Gastrocnemius medialis (tissue), 4 donors: ENCODE measurements at regions of chr18 and their contacts with region 1.

Region 1: GRCh38 chr18:10851824-10852319 is 297.5 kb downstream of the PIEZO2 start:
- DNase-seq: no peak
- ATAC-seq: no peak
- H3K4me3 ChIP-seq: no peak overlapping the region
- H3K27ac ChIP-seq: no peak overlapping the region
- H3K4me1 ChIP-seq: no peaks in the 10 kb centered on the region
- H3K27me3 ChIP-seq: no peaks in the 10 kb centered on the region
- CTCF ChIP-seq: peak; percentile 55 to 75 (median 69)
- POLR2A ChIP-seq: no peak

Region 2: GRCh38 chr18:11040823-11041656 is 189.2 kb after region 1 on chr18:
- in situ Hi-C with region 1: loop called (anchors 5 to 25 kb)
- intact Hi-C with region 1: no loop called
- DNase-seq: peak in 1 of 2 donors; percentile 4
- ATAC-seq: peak; percentile 44 to 69
- H3K4me3 ChIP-seq: no peak overlapping the region
- H3K27ac ChIP-seq: no peak overlapping the region
- H3K4me1 ChIP-seq: peaks cover 0 to 3% of the 10 kb centered on the region in 2 donors
- H3K27me3 ChIP-seq: no peaks in the 10 kb centered on the region
- CTCF ChIP-seq: peak in 4 of 5 experiments; percentile 42 to 64 (median 56)
- POLR2A ChIP-seq: no peak

Region 3: GRCh38 chr18:11149441-11150270 is 297.8 kb after region 1 on chr18 and contains the start of gene PIEZO2:
- in situ Hi-C with region 1: loop called in 2 of 4 experiments (anchors 5 to 25 kb)
- intact Hi-C with region 1: loop called (anchors 2 kb)
- DNase-seq: peak; percentile 17 to 57
- ATAC-seq: peak; percentile 80 to 82
- H3K4me3 ChIP-seq: peak within 1 kb of the TSS; percentile 53 to 63 (median 62)
- H3K27ac ChIP-seq: no peak within 1 kb of the TSS
- H3K4me1 ChIP-seq: peaks cover 0 to 6% of the 10 kb centered on the region in 2 donors
- H3K27me3 ChIP-seq: peaks cover 6 to 18% (median 15%) of the 10 kb centered on the region in 3 donors
- CTCF ChIP-seq: no peak
- POLR2A ChIP-seq: peak in 1 of 2 donors; percentile 24
- total RNA-seq, gene PIEZO2: 0.18 to 3.0 (median 0.21) TPM

Region 4: DNA sequence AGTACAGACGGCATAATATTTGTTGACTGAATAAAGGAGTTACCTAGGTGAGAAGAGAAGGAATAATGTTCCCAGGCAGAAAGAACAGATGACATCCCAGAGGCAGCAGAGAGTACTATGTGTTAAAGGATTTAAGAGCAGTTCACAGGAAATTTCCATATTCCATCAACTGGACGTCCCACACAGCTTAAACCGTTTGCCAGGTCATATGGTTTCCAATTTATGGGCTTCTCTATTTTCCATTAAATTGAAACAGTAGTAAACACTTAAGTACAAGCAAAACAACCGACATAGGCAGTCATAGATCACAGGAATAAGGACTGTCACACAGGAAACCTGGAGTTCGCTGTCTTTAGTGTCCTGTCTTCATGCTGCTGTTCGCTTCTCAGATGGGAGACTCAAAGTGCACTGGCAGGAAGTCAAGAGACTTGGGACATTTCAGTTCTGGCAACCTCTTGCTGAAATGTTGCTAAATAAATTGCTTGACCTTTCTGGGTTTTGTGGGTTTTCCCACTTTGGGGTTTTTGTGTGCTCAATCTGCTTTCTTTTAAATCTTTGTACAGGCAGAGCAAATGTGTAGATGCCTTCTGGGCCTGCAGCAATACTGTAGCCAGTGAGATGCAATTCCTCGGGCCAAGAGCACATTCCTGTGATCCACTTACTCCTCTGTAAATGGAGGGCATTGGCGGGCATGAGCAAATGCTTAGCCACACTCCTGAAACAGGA is 303.3 kb after region 1 on chr18:
- in situ Hi-C with region 1: loop called in 2 of 4 experiments (anchors 5 kb)
- intact Hi-C with region 1: loop called (anchors 2 kb)
- DNase-seq: no peak
- ATAC-seq: no peak
- H3K4me3 ChIP-seq: no peak overlapping the region
- H3K27ac ChIP-seq: no peak overlapping the region
- H3K4me1 ChIP-seq: no peaks in the 10 kb centered on the region
- H3K27me3 ChIP-seq: no peaks in the 10 kb centered on the region
- CTCF ChIP-seq: no peak
- POLR2A ChIP-seq: no peak

Region 5: DNA sequence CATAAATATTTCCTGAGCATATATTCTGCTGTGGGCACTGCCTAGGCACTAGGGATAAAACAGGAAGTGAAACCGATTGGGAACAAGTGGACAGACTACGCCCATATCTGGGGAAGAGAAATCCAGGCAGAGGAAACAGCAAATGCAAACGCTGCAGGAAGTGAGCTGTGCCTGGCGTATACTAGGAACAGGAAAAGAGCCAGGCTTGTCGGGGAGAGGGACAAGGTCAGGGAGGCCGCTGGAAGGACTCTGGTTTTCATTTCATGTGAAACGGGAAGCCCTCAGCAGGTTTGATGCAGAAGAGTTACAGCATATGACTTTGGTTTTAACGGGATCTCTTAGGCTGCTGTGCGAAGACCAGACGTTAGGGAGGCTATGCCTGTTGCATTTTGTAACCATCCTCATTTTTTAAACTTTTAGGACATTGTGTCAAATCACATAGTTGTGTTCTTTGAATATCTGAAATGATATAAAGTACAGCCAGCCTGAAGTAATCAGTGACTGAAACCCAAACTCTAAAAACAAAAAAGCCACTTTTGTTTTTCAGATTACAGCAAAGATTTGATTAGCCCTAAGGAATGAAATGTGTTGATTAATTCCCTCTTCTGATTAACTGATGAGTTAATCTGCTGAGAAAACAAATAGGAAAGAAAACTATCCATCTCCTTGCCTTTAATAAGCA is 407.7 kb after region 1 on chr18:
- in situ Hi-C with region 1: loop called in 1 of 4 experiments (anchors 25 kb)
- intact Hi-C with region 1: no loop called
- DNase-seq: peak; percentile 37 to 62
- ATAC-seq: peak; percentile 45 to 81
- H3K4me3 ChIP-seq: peak overlapping the region in 1 of 4 donors; percentile 11
- H3K27ac ChIP-seq: peak overlapping the region in 1 of 4 donors; percentile 47
- H3K4me1 ChIP-seq: peaks cover 0 to 6% of the 10 kb centered on the region in 2 donors
- H3K27me3 ChIP-seq: no peaks in the 10 kb centered on the region
- CTCF ChIP-seq: no peak
- POLR2A ChIP-seq: no peak

Region 6: DNA sequence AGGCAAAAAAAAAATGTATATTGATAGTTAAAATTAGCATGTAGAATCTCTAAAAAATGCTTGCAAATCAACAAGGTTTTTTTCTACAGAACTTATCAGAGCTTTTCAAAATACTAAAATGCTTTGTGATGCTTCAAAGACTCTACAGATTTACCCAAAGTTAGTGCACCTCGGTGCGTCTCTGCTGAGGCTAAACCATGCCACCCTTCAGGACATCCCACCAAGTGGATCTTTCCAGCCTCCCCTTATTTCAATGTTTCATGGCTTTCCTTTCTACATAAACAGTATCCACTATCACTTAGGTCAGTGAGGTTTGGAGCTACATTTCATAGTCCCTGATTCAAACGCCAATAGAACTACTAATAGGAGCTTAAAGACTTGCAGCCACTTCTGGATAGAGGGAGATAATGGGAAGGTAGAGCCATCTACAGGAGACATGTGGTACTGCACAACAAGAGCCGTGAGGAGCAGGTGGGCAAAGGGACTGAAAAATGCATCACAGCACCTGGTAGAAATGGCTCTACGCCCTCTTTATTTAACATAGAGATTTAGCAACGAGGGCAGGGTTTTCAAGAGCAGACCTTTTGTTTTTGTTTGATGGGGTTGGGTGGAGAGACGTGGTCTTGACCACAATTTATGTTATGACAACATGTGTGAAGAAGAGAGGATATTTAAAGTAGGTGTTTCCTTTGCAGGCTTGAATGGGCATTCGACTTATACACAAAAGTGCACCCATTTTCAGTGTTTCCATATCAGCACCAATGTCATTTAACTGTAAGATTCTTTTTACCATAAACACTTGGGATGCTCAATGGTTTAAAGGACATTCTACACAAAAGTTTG is 701.4 kb after region 1 on chr18:
- in situ Hi-C with region 1: loop called (anchors 5 to 25 kb)
- intact Hi-C with region 1: loop called (anchors 5 kb)
- DNase-seq: no peak
- ATAC-seq: peak; percentile 69 to 82
- H3K4me3 ChIP-seq: no peak overlapping the region
- H3K27ac ChIP-seq: no peak overlapping the region
- H3K4me1 ChIP-seq: no peaks in the 10 kb centered on the region
- H3K27me3 ChIP-seq: no peaks in the 10 kb centered on the region
- CTCF ChIP-seq: peak; percentile 75 to 87 (median 79)
- POLR2A ChIP-seq: no peak